Esophagus muscularis mucosa (tissue), 4 donors: ENCODE measurements at regions of chr19 and their contacts with region 1.

Region 1: DNA sequence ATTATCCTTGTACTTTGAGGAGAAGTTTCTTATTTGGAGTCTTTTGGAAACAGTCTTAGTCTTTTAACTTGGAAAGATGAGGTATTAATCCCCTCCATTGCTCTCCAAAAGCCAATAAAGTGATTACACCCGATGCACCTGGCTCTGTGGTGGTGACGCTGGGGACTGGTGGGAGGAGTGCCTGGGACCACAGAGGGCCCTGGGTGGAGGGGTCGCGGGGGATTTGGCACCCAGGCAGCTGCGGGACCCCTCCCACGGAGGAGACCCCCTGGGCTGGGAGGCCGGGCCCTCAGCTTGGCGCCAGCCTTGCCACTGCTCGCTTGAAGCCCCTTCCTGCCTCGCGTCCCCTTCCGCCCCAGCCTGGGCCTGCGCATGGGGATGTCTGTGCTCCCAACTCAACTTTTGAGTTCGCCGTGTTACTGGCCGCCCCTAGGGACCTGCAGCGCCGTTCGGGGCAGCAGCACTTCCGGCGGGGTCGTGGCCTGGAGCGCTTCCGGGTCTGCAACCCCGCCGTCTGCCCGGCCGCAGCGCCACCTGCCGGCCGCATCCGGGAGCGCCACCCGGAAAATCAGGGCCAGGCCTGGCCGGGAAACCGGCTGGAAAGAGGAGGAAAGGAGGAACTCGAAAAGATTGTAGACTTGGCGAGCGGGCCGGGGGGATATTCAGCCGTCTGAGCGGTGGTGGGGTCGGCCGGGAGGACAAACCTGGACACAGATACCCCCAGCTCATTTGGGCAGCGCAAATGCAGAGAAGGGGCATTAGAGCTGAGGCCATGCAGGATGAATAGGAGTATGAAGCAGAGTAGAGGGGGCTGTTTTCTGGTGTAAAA is 8.4 kb downstream of the PEAK3 start:
- DNase-seq: no peak
- H3K4me3 ChIP-seq: peak overlapping the region; percentile 39 to 53 (median 41)
- H3K27ac ChIP-seq: peak overlapping the region; percentile 99 to 100 (median 100)
- H3K4me1 ChIP-seq: peaks cover 42 to 63% (median 63%) of the 10 kb centered on the region in 4 donors
- H3K27me3 ChIP-seq: no peaks in the 10 kb centered on the region
- CTCF ChIP-seq: peak in 2 of 3 experiments; percentile 95 to 97
- EP300 ChIP-seq: no peak
- POLR2A ChIP-seq: no peak

Region 2: GRCh38 chr19:2157452-2157851 is 116.1 kb before region 1 on chr19:
- intact Hi-C with region 1: loop called (anchors 2 kb)
- DNase-seq: no peak
- H3K4me3 ChIP-seq: no peak overlapping the region
- H3K27ac ChIP-seq: no peak overlapping the region
- H3K4me1 ChIP-seq: peaks cover 0 to 10% (median 6%) of the 10 kb centered on the region in 4 donors
- H3K27me3 ChIP-seq: no peaks in the 10 kb centered on the region
- CTCF ChIP-seq: no peak
- EP300 ChIP-seq: no peak
- POLR2A ChIP-seq: no peak

Region 3: DNA sequence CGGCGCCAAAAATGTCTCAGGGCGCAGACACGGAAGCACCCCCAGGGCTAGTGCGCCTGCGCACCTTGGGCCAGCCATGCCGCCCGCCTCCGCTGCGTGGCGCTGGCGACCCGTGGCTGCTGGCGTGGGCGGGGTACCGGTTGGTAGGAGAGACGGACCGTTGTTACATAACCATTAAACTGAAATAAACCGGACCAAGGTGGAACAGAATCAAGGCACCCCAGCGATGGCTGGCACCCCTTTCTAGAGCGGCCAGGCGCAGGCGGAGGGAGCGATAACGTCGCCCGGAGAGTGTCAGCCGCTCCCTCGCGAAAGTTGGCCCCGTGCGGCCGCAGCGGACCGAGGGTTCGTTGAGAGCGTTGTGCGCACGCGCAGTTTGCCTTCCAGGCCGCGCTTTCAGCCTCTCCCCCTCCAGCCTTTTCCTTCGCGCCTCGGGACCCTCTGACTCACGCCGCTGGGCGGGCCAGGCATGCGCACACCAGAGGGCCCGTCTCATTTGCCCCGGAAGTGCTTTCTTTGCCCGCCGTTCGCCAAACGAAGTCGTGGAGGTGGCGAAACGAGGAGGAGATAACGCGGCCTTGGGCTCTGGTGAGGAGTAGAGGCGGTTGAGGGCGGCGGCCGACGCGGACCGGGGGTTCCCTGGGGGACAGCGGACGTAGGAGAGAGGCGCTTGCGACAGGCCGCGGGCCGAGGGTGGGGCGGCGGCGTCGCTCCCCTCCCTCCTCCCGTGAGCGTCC is 37.1 kb before region 1 on chr19 and contains the starts of genes PLEKHJ1 and SF3A2:
- intact Hi-C with region 1: loop called (anchors 1 kb)
- DNase-seq: peak; percentile 99
- H3K4me3 ChIP-seq: peak within 1 kb of the TSS; percentile 88 to 100 (median 98)
- H3K27ac ChIP-seq: peak within 1 kb of the TSS; percentile 94 to 99 (median 96)
- H3K4me1 ChIP-seq: peaks cover 66 to 86% (median 71%) of the 10 kb centered on the region in 4 donors
- H3K27me3 ChIP-seq: no peaks in the 10 kb centered on the region
- CTCF ChIP-seq: peak; percentile 99 to 100 (median 100)
- EP300 ChIP-seq: no peak
- POLR2A ChIP-seq: peak; percentile 74
- total RNA-seq, gene PLEKHJ1: 41.9 to 69.8 (median 55.3) TPM
- total RNA-seq, gene SF3A2: 29.5 to 56.9 (median 35.3) TPM

Region 4: DNA sequence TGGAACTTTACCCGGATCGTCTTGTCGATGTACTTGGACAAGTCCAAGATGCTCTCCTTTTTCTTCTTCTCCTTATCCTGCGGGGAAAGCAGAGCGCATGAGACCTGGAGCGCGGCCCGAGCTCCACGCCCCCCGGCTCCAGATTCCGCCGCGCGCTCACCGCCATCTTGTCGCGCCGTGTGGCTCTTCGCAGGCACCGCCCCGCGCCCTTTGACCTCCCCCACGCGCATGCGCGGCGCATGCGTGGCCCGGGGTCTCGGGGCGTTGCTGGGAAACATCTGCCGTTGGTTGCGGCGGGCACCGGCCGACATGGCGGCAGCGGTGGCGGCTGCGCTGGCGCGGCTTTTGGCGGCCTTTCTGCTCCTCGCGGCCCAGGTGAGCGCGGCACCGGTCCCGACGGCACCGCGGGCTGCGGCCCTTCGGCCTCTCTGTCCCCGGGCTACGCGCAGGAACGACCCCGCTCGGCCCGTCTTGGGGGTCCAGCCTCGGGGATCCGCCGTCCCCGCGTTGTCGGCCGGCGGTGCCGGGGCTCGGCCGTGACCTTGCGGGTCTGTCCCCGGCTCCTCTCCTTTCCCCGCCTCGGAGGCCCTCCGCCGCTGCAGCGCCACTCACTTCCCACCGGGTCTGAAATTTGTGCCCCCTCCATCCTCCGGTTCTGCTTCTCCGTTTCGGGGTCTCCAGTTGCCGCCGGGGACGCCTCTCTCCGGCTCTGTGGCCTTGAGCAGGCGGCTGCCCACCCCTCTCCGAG is 55.0 kb after region 1 on chr19 and contains the starts of genes LSM7 and SPPL2B:
- intact Hi-C with region 1: loop called (anchors 5 kb)
- DNase-seq: peak; percentile 97
- H3K4me3 ChIP-seq: peak within 1 kb of the TSS; percentile 87 to 100 (median 92)
- H3K27ac ChIP-seq: peak within 1 kb of the TSS; percentile 76 to 85 (median 81)
- H3K4me1 ChIP-seq: peaks cover 55 to 74% (median 67%) of the 10 kb centered on the region in 4 donors
- H3K27me3 ChIP-seq: no peaks in the 10 kb centered on the region
- CTCF ChIP-seq: peak in 1 of 3 experiments; percentile 34
- EP300 ChIP-seq: no peak
- POLR2A ChIP-seq: no peak
- total RNA-seq, gene LSM7: 76.4 to 113 (median 106) TPM
- total RNA-seq, gene SPPL2B: 25.0 to 42.4 (median 29.9) TPM

Region 5: GRCh38 chr19:2391118-2391725 is 117.7 kb after region 1 on chr19:
- intact Hi-C with region 1: loop called (anchors 5 kb)
- DNase-seq: no peak
- H3K4me3 ChIP-seq: no peak overlapping the region
- H3K27ac ChIP-seq: no peak overlapping the region
- H3K4me1 ChIP-seq: no peaks in the 10 kb centered on the region
- H3K27me3 ChIP-seq: peaks cover 0 to 46% (median under 1%) of the 10 kb centered on the region in 4 donors
- CTCF ChIP-seq: peak; percentile 75 to 84 (median 82)
- EP300 ChIP-seq: no peak
- POLR2A ChIP-seq: no peak

Region 6: GRCh38 chr19:2627319-2627829 is 353.8 kb after region 1 on chr19:
- intact Hi-C with region 1: no loop called
- DNase-seq: peak; percentile 95
- H3K4me3 ChIP-seq: no peak overlapping the region
- H3K27ac ChIP-seq: peak overlapping the region; percentile 67 to 83 (median 78)
- H3K4me1 ChIP-seq: peaks cover 23 to 30% (median 24%) of the 10 kb centered on the region in 4 donors
- H3K27me3 ChIP-seq: no peaks in the 10 kb centered on the region
- CTCF ChIP-seq: no peak
- EP300 ChIP-seq: peak; percentile 82
- POLR2A ChIP-seq: peak; percentile 4